ENCODE measurements at regions of chr2 and their contacts with region 1.

Region 1: GRCh38 chr2:105812180-105813044 is 67.7 kb downstream of the NCK2 start:
- DNase-seq: peak; percentile 60
- ATAC-seq: peak; percentile 93
- H3K4me3 ChIP-seq: 0 out of 6 replicates have a peak overlapping the region, but pooled peaks of 2 of the 3 experiments have one; percentile 1 to 11
- H3K27ac ChIP-seq: peak overlapping the region; percentile 33
- H3K4me1 ChIP-seq: peaks cover 22% of the 10 kb centered on the region
- H3K27me3 ChIP-seq: no peaks in the 10 kb centered on the region
- CTCF ChIP-seq: peak; percentile 16; the same call in 1 of the 2 replicates
- EP300 ChIP-seq: no peak
- POLR2A ChIP-seq: no peak
- RAD21 ChIP-seq: no peak

Region 2: GRCh38 chr2:105800036-105800713 is 12.2 kb before region 1 on chr2:
- CTCF ChIA-PET with region 1: no interaction called
- POLR2A ChIA-PET with region 1: no interaction called
- in situ Hi-C with region 1: no loop called
- intact Hi-C with region 1: loop called (anchors 1 kb)
- DNase-seq: peak; percentile 65
- ATAC-seq: peak; percentile 68
- H3K4me3 ChIP-seq: no peak overlapping the region
- H3K27ac ChIP-seq: no peak overlapping the region
- H3K4me1 ChIP-seq: peaks cover 53% of the 10 kb centered on the region
- H3K27me3 ChIP-seq: no peaks in the 10 kb centered on the region
- CTCF ChIP-seq: no peak
- EP300 ChIP-seq: peak in 1 of 2 experiments; percentile 27; a peak in 1 of 4 replicates
- POLR2A ChIP-seq: no peak
- RAD21 ChIP-seq: no peak

Measured in HepG2 (cell line).